MCF 10A (cell line): ENCODE measurements at regions of chr11 and their contacts with region 1.

Region 1: DNA sequence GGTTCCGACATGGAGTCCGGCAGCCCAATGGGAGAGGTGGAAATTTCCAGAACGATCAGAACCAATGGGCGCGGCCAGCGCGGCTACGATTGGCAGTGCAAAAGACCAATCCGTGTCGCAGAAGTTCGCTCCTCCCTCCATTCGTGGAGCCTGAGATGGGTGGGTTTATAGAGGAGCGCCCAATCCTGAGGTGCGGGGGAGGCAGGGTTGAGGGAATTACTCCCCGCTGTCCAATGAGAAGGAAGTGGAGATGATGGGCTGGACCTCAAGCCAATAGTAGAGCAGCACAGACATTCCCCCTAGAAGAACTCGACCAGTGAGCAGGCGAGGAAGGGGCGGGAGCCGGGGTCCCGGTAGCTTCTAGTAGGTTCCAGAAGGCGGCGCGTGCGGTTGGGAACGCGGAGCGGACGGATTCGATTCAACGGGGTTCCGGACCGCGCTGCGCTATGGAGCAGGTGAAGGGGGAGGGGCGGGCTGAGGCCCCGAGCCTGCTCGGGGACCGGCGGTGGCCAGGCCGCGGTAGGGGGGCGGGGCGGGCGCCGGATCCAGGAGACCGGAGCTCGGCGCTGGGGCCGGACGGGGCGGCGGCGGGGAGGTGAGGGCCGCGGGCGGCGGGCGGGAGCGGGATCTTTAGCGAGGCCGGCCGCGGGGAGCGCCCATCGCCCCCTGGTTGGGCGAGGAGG is at the start of gene STIP1:
- DNase-seq: peak; percentile 100
- H3K4me3 Mint-ChIP-seq: no peak within 1 kb of the TSS
- H3K27ac Mint-ChIP-seq: no peak within 1 kb of the TSS
- H3K4me1 Mint-ChIP-seq: peaks cover 7% of the 10 kb centered on the region
- H3K27me3 Mint-ChIP-seq: no peaks in the 10 kb centered on the region
- CTCF ChIP-seq: peak; percentile 23
- total RNA-seq, gene STIP1: 161 and 171 TPM in 2 replicates

Region 2: DNA sequence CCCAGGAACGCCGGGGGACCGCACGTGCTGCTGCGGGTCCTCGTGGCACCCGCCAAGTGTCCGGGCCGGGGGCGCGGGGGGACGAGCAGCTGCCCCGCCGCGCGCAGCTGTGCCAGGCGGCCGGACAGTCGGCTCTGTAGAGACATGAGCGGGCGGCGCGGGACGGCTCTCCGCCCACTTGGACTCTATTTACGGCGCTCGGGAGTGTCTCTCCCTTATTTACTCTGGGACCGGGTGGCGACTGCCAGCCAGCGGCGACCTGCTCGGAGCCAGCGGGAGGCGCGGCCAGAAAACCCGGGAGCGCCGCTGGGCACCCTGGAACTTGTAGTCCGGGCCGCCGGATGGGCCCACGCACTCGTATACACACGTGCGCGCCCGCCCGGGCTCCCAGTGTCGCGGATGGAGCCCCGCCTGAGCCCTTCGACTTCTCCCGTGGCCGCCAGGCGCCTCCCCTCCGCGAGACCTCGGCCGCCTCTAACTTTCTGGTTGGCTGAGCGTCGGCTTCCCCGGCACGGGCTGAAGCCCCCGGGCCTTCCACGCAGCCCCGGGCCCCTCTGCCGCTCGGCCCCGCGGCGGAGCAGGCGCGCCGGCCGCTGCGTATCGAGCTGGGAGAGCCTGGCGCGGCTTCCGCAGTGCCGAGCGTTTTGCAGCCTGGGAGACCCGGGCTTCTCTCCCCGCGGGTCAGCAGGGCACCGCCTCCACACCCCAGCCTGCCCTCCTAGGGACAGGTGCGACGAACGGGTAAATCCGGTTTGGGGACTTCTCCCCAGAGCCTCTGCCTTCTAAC is 19.9 kb before region 1 on chr11 and contains the start of gene MACROD1:
- CTCF ChIA-PET with region 1: interaction called, 8 read pairs
- POLR2A ChIA-PET with region 1: interaction called, 42 read pairs
- intact Hi-C with region 1: no loop called
- DNase-seq: peak; percentile 87
- H3K4me3 Mint-ChIP-seq: peak within 1 kb of the TSS; percentile 92
- H3K27ac Mint-ChIP-seq: peak within 1 kb of the TSS; percentile 82
- H3K4me1 Mint-ChIP-seq: peaks cover 7% of the 10 kb centered on the region
- H3K27me3 Mint-ChIP-seq: no peaks in the 10 kb centered on the region
- CTCF ChIP-seq: no peak
- total RNA-seq, gene MACROD1: 15.1 and 15.7 TPM in 2 replicates

Region 3: GRCh38 chr11:64240394-64241174 is 54.6 kb after region 1 on chr11 and contains the start of gene FKBP2:
- CTCF ChIA-PET with region 1: no interaction called
- POLR2A ChIA-PET with region 1: interaction called, 28 read pairs
- intact Hi-C with region 1: no loop called
- DNase-seq: peak; percentile 96
- H3K4me3 Mint-ChIP-seq: peak within 1 kb of the TSS; percentile 93
- H3K27ac Mint-ChIP-seq: peak within 1 kb of the TSS; percentile 98
- H3K4me1 Mint-ChIP-seq: peaks cover 19% of the 10 kb centered on the region
- H3K27me3 Mint-ChIP-seq: no peaks in the 10 kb centered on the region
- CTCF ChIP-seq: no peak
- total RNA-seq, gene FKBP2: 84.7 and 86.0 TPM in 2 replicates